ENCODE measurements at regions of chr6 and their contacts with region 1.

Region 1: GRCh38 chr6:7561153-7561964 is 19.9 kb downstream of the DSP start:
- DNase-seq: peak; percentile 93
- H3K4me3 Mint-ChIP-seq: peak overlapping the region; percentile 64
- H3K27ac Mint-ChIP-seq: peak overlapping the region; percentile 88
- H3K4me1 Mint-ChIP-seq: peaks cover 27% of the 10 kb centered on the region
- H3K27me3 Mint-ChIP-seq: no peaks in the 10 kb centered on the region
- CTCF ChIP-seq: no peak

Region 2: DNA sequence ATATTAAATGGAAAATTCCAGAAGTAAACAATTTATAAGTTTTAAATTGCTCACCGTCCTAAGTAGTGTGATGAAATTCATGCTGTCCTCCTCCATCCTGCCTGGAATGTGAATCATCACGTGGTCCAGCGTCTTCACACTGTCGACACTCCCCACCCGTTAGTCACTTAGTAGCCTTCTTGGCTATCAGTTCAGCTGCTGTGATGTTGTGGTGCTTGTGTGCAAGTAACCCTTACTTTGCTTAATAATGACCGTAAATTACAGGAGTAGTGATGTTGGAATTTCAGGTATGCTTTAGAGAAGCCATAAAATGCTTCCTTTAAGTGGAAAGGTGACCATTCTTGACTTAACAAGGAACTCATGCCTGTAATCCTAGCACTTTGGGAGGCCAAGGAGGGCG is 146.5 kb before region 1 on chr6:
- CTCF ChIA-PET with region 1: no interaction called
- POLR2A ChIA-PET with region 1: interaction called, 4 read pairs
- intact Hi-C with region 1: loop called (anchors 1 kb)
- DNase-seq: peak; percentile 82
- H3K4me3 Mint-ChIP-seq: peak overlapping the region; percentile 20
- H3K27ac Mint-ChIP-seq: peak overlapping the region; percentile 41
- H3K4me1 Mint-ChIP-seq: peaks cover 12% of the 10 kb centered on the region
- H3K27me3 Mint-ChIP-seq: no peaks in the 10 kb centered on the region
- CTCF ChIP-seq: no peak

Region 3: DNA sequence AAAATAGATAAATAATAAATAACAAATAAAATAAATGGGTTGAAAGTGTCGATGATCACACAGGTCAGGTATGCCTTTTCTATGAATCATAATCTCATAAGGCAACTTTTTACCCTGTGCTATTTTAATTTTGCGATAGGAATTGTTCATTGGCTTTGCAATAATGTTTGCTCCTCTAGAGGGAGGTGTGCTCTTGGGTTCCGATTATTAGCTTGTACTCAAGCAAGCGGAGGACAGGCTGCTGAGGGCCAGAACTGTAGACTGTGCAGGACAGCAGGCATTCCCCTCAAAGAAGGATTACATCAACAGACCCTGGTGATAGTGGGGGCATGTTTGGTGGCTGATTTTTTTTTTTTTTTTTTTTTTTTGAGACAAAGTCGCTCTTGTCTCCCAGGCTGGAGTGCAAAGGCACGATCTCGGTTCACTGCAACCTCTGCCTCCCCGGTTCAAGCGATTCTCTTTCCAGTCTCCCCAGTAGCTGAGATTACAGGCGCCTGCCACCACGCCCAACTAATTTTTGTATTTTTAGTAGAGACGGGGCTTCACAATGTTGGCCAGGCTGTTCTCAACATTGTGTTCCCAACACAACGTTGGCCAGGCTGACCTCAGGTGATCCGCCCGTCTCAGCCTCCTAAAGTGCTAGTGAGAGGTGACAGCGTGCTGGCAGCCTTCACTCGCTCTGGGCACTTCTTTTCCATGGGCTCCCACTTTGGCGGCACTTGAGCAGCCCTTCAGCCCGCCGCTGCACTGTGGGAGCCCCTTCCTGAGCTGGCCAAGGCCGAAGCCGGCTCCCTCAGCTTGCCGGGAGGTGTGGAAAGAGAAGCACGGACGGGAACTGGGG is 136.2 kb before region 1 on chr6:
- CTCF ChIA-PET with region 1: interaction called, 3 read pairs
- POLR2A ChIA-PET with region 1: interaction called, 10 read pairs
- intact Hi-C with region 1: loop called (anchors 2 kb)
- DNase-seq: peak; percentile 80
- H3K4me3 Mint-ChIP-seq: no peak overlapping the region
- H3K27ac Mint-ChIP-seq: no peak overlapping the region
- H3K4me1 Mint-ChIP-seq: no peaks in the 10 kb centered on the region
- H3K27me3 Mint-ChIP-seq: no peaks in the 10 kb centered on the region
- CTCF ChIP-seq: peak; percentile 61